ENCODE measurements at regions of chr12 and their contacts with region 1.

Region 1: DNA sequence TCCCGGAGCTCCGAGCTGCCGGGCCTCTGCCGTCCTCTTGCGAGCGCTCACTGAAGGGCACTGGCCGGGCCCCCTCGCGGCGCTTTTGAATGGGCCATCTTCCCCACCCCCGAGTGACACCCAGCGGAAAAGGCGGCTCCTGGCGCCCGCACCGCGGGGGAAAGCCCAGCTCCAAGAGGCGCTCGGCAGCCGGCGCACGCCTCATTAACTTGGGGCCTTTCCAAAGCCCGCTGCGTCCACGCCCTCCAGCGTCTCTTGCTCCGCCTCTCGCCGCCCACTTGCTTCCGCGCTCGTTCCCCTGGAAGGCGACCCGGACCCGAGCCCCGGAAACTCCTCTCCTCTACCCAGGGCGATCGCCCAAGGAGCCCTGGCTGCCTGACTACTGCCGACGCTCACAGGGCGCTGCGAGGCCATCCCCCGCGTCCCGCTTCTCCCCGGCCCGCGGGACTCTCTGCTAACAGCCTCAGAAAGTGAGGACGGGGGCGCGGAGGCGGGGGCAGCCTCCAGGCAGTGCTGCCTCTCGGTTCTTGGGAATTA is at the start of gene PHLDA1:
- DNase-seq: peak; percentile 91
- ATAC-seq: peak; percentile 88
- H3K4me3 ChIP-seq: peak within 1 kb of the TSS; percentile 97 to 99 (median 98)
- H3K27ac ChIP-seq: peak within 1 kb of the TSS; percentile 95
- H3K4me1 ChIP-seq: peaks cover 54% of the 10 kb centered on the region
- H3K27me3 ChIP-seq: peaks cover 0 to 3% of the 10 kb centered on the region in 2 experiments; a peak in 1 of 5 replicates
- CTCF ChIP-seq: peak; percentile 78
- EP300 ChIP-seq: no peak; a peak in 1 of 4 replicates
- POLR2A ChIP-seq: peak; percentile 95
- RAD21 ChIP-seq: peak; percentile 99
- total RNA-seq, gene PHLDA1: 41.0 and 42.6 TPM in 2 replicates

Region 2: DNA sequence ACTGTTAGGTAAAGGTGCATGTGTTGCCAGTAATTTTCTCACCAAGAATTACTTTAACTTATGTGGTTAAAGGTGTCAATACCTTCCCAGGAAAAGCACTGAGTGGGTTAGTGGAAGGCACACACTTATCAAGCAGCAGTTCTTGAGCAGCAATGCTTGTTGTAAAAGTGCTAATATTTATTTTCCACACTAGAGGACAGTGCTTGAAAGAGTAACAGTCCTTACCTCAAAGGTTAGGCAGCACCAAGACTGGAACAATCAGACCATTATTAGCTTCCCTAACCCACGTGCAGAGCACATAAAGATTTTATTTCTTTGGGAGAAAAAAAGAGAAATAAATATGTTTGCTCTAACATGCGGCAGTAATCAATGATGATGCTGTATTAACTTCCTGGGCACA is 471.4 kb before region 1 on chr12:
- CTCF ChIA-PET with region 1: interaction called, 3 read pairs
- POLR2A ChIA-PET with region 1: interaction called, 16 read pairs
- in situ Hi-C with region 1: no loop called
- intact Hi-C with region 1: no loop called
- DNase-seq: peak; percentile 68
- ATAC-seq: peak; percentile 87
- H3K4me3 ChIP-seq: no peak overlapping the region
- H3K27ac ChIP-seq: no peak overlapping the region
- H3K4me1 ChIP-seq: peaks cover 55% of the 10 kb centered on the region
- H3K27me3 ChIP-seq: no peaks in the 10 kb centered on the region
- CTCF ChIP-seq: peak; percentile 83
- EP300 ChIP-seq: no peak
- POLR2A ChIP-seq: no peak
- RAD21 ChIP-seq: peak; percentile 58; the same call in 1 of the 2 replicates

Region 3: DNA sequence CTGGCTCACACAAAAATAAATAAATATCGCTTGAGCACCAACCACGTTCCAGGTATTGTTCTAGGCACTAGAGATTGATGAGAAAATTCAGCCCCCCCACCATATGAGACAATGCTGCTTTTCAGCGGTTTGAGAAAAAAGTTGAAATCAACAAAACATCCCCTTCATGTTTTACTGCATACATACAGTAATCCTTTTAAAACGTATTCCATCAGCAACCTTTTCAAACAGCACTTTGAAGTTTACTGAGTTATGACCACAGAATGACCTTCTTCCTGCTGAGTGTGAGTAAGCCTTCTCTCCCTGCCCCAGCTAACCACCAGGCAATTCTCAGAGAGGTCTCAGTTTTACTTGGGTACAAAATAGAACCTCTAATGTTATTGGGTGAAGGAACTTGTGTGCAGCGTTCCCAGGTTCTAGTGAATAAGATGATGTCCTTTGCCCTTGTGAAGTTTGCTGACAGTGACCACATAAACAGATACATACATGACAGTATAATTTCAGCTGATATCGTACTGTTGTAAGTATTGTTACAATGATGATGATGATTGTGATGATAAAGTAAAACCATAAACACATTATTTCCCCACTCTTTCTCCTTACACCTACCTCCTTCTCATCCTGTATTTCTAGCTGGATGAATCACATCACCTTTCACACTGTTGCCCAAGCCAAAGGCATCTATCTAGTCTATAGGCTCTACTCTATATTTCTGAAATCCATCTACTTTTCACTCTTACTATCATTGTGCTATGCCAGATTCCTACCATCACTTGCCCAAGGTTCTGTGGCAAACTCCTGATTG is 395.8 kb before region 1 on chr12:
- CTCF ChIA-PET with region 1: no interaction called
- POLR2A ChIA-PET with region 1: interaction called, 10 read pairs
- in situ Hi-C with region 1: no loop called
- intact Hi-C with region 1: no loop called
- DNase-seq: peak; percentile 97
- ATAC-seq: peak; percentile 98
- H3K4me3 ChIP-seq: no peak overlapping the region
- H3K27ac ChIP-seq: peak overlapping the region; percentile 66
- H3K4me1 ChIP-seq: peaks cover 56% of the 10 kb centered on the region
- H3K27me3 ChIP-seq: no peaks in the 10 kb centered on the region
- CTCF ChIP-seq: no peak
- EP300 ChIP-seq: peak; percentile 80 to 98
- POLR2A ChIP-seq: no peak
- RAD21 ChIP-seq: no peak

Region 4: DNA sequence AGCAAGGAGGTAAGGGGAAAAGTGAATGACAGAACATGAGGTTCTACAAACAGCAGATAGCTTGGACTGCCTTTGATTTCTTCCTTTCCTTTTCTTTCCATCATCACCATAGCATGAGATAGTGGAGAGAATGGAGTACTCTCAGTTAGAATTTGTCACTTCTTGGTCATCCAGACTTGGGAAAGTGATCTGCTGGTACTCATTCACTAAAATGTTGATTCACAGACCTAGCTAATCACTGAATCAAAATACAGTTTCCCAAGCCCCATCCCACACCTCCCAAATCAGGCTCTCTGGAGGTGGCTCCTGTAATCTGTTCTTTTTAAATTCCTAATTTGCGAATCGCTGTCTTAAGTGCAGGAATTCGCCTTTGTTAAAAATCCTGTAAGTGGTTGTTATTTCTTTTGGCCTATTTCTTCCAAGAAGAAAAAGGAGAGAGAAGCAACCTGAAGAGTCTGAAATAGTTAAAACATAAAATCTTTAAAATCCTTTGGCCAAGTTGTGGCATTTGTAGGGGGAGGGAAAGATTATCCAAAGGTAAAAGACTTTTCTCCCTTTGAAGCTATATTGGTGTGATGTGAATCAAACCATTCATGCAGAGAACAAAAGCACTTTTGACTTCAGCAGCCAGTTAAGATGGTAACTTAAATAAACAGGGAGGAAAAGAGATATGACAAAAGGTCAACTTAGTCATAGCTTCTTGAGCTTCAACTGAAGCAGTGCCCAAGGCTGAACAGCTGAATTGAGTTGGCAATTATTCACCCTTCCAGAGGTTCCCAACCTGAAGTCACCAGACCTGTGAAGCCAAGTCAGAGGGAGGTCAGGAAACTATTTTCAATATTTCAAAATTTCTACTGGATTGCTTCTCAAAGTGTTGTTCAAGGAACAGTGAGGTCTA is 265.1 kb before region 1 on chr12:
- CTCF ChIA-PET with region 1: no interaction called
- POLR2A ChIA-PET with region 1: interaction called, 30 read pairs
- in situ Hi-C with region 1: no loop called
- intact Hi-C with region 1: loop called (anchors 5 kb)
- DNase-seq: peak; percentile 97
- ATAC-seq: peak; percentile 92
- H3K4me3 ChIP-seq: peak overlapping the region in 1 of 3 experiments; percentile 3; a peak in 1 of 6 replicates
- H3K27ac ChIP-seq: peak overlapping the region; percentile 86
- H3K4me1 ChIP-seq: peaks cover 57% of the 10 kb centered on the region
- H3K27me3 ChIP-seq: no peaks in the 10 kb centered on the region
- CTCF ChIP-seq: no peak
- EP300 ChIP-seq: peak in 1 of 2 experiments; percentile 98; a peak in 2 of 4 replicates
- POLR2A ChIP-seq: no peak
- RAD21 ChIP-seq: peak; percentile 30; the same call in 1 of the 2 replicates

Region 5: DNA sequence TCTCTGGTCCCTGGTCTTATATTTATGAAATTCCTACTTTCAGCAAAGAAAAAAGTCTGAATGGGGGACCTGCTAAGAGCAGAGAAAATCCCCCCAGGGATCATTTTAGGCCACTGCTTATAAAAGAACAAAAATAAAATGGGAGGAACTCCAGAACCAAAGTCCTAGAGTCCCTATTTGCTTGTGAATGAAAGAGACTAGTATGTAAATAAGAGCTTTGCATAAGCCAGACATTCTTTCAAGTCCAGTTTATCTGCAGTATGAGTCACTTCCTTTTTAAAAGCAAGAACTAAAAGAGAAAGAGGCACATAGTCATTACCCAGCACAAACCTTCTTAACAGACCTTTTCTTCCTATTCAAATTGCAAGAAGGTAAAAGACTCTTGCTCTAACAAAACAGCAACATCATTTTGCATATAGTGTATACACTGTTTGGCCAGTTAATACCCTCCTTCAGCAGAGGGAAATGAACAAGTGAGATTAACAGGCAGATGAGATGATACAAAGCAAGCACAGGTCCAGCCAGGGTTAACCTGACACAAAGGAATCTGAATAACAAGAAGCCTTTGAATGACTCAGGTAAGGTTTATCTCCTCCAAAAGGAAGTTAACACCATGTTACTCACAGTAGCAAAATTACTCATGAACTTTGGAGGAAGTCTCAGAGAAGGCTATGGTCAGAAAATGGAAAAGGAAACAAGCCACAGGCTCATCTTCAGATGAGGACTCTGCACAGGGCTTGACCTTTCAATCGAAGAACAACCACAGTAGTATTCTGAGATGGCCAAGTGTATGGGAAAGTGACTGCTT is 87.3 kb before region 1 on chr12:
- CTCF ChIA-PET with region 1: no interaction called
- POLR2A ChIA-PET with region 1: interaction called, 47 read pairs
- in situ Hi-C with region 1: no loop called
- intact Hi-C with region 1: loop called (anchors 1 kb)
- DNase-seq: peak; percentile 97
- ATAC-seq: peak; percentile 96
- H3K4me3 ChIP-seq: peak overlapping the region in 2 of 3 experiments; percentile 1 to 32; a peak in 2 of 6 replicates
- H3K27ac ChIP-seq: peak overlapping the region; percentile 96
- H3K4me1 ChIP-seq: peaks cover 54% of the 10 kb centered on the region
- H3K27me3 ChIP-seq: no peaks in the 10 kb centered on the region
- CTCF ChIP-seq: no peak
- EP300 ChIP-seq: peak; percentile 97 to 99
- POLR2A ChIP-seq: no peak; a peak in 1 of 4 replicates
- RAD21 ChIP-seq: no peak

Region 6: DNA sequence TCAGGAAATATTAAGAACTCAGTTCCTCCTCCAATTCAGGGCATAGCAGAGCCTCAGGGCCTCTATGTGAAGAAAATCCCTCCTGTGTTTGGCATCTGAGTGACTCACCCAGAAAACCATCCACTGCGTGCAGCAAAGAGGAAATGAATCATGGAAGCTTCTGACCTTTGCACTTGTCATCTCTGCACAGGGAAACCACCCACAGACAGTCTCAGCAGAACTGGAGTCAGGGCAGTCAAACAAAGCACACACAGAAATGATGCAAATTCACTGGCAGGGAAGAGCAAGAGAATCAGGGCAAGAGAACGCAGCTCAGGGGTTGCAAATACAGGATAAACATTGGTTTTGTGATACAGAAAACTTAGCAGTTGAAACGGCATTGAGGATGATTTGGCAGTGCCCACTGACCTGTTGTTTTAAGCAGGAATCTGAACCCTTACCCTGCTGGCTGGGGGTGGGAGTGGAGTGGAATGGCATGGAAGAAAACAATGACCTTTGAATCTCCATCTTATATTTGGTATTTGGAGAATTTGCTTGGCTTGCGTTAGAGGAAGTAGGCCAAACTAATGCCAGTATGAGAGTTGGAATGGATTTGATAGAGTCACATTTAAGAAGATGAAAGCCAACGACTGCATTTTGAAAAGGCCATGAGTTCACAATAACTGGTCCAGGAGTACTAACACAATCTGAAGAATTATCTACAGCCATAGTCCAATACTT is 53.5 kb before region 1 on chr12:
- CTCF ChIA-PET with region 1: no interaction called
- POLR2A ChIA-PET with region 1: interaction called, 45 read pairs
- in situ Hi-C with region 1: no loop called
- intact Hi-C with region 1: loop called (anchors 1 kb)
- DNase-seq: peak; percentile 100
- ATAC-seq: peak; percentile 94
- H3K4me3 ChIP-seq: peak overlapping the region; percentile 7 to 51 (median 15); a peak in 3 of 6 replicates
- H3K27ac ChIP-seq: peak overlapping the region; percentile 91
- H3K4me1 ChIP-seq: peaks cover 85% of the 10 kb centered on the region
- H3K27me3 ChIP-seq: no peaks in the 10 kb centered on the region
- CTCF ChIP-seq: no peak
- EP300 ChIP-seq: peak; percentile 96 to 98
- POLR2A ChIP-seq: peak in 1 of 2 experiments; percentile 41; a peak in 3 of 4 replicates
- RAD21 ChIP-seq: peak; percentile 67; the same call in 1 of the 2 replicates

Region 7: GRCh38 chr12:76020731-76021672 is 10.6 kb before region 1 on chr12:
- CTCF ChIA-PET with region 1: no interaction called
- POLR2A ChIA-PET with region 1: interaction called, 26 read pairs
- in situ Hi-C with region 1: no loop called
- intact Hi-C with region 1: no loop called
- DNase-seq: no peak
- ATAC-seq: no peak
- H3K4me3 ChIP-seq: no peak overlapping the region
- H3K27ac ChIP-seq: peak overlapping the region; percentile 3
- H3K4me1 ChIP-seq: peaks cover 48% of the 10 kb centered on the region
- H3K27me3 ChIP-seq: no peaks in the 10 kb centered on the region
- CTCF ChIP-seq: no peak
- EP300 ChIP-seq: no peak
- POLR2A ChIP-seq: no peak
- RAD21 ChIP-seq: no peak

Region 8: DNA sequence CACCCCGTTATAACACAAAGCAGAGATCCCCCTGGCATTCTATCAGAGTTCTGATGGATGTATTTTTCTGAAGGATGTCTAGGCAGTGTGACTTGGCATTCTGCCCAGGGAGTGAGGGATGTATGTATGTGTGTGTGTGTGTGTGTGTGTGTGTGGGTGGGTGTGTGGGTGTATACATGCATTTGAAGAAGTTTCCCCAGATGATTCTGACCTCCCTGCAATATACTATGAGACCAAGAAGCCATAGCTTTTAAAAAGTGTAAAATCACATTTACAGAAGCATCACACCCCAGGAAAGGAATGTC is 112.6 kb after region 1 on chr12:
- CTCF ChIA-PET with region 1: no interaction called
- POLR2A ChIA-PET with region 1: no interaction called
- in situ Hi-C with region 1: no loop called
- intact Hi-C with region 1: no loop called
- DNase-seq: no peak
- ATAC-seq: no peak
- H3K4me3 ChIP-seq: no peak overlapping the region
- H3K27ac ChIP-seq: no peak overlapping the region
- H3K4me1 ChIP-seq: no peaks in the 10 kb centered on the region
- H3K27me3 ChIP-seq: no peaks in the 10 kb centered on the region; a peak in 2 of 5 replicates
- CTCF ChIP-seq: no peak
- EP300 ChIP-seq: no peak
- POLR2A ChIP-seq: no peak
- RAD21 ChIP-seq: no peak

Region 9: GRCh38 chr12:76942267-76942666 is 910.7 kb after region 1 on chr12:
- CTCF ChIA-PET with region 1: no interaction called
- POLR2A ChIA-PET with region 1: no interaction called
- in situ Hi-C with region 1: no loop called
- intact Hi-C with region 1: no loop called
- DNase-seq: no peak
- ATAC-seq: no peak
- H3K4me3 ChIP-seq: no peak overlapping the region
- H3K27ac ChIP-seq: no peak overlapping the region
- H3K4me1 ChIP-seq: no peaks in the 10 kb centered on the region
- H3K27me3 ChIP-seq: no peaks in the 10 kb centered on the region
- CTCF ChIP-seq: no peak
- EP300 ChIP-seq: no peak
- POLR2A ChIP-seq: no peak
- RAD21 ChIP-seq: no peak